CD14-positive monocyte (primary cell): ENCODE measurements at regions of chr3 and their contacts with region 1.

Region 1: GRCh38 chr3:121834696-121835464 is at the starts of genes EAF2 and IQCB1:
- DNase-seq: peak; percentile 94 to 97 (median 96)
- H3K4me3 ChIP-seq: peak within 1 kb of the TSS; percentile 83 to 97 (median 93)
- H3K4me3 Mint-ChIP-seq: peak within 1 kb of the TSS; percentile 96 to 97
- H3K27ac ChIP-seq: peak within 1 kb of the TSS; percentile 75 to 90
- H3K27ac Mint-ChIP-seq: peak within 1 kb of the TSS; percentile 88 to 97 (median 94)
- H3K4me1 ChIP-seq: peaks cover 18 to 44% of the 10 kb centered on the region in 2 donors
- H3K4me1 Mint-ChIP-seq: peaks cover 52% of the 10 kb centered on the region
- H3K27me3 ChIP-seq: no peaks in the 10 kb centered on the region
- H3K27me3 Mint-ChIP-seq: peaks cover 0 to 2% (median 0%) of the 10 kb centered on the region in 3 donors
- CTCF ChIP-seq: no peak
- polyA plus RNA-seq, gene EAF2: 31.5 to 91.6 (median 75.7) TPM
- polyA plus RNA-seq, gene IQCB1: 6.0 to 27.7 (median 7.5) TPM

Region 2: DNA sequence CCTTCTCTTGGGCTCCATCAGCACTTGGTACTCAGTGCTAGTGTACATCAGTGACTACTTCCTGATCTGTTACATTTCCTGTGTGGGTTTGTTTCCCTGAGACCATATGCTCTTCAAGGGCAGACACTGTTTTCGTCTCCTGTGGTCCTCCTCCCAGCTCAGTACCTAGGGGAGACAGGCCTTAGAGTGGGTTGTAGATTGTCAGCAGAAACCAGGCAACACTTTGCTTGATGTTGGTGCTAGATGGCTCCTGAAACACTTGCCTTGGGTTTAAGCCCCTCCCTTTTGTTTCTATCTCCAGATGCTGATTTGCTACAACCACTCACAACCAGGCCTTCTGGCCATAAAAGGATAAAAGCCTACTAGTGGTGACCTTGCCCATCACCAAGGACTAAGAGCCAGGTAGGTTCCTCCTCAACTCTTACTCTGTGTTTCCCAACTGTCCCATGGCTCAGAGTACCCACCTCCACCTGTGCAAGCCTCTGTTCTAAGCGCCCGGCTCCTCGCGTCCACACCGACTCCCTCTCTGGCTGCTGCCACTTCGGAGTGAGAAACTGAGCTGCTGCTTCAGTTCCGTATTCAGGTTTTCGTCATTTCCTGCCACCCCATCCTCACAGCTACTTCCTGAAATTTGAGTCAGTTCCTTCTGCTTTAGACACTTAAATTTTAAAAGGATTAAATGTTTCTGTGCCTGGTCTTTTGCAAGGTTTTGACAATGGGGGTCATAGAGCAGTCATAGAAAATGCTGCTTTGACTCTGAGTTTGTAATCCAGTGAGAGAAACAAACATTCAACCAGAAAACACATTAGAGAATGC is 174.3 kb before region 1 on chr3 and contains the start of gene HCLS1:
- intact Hi-C with region 1: loop called in 1 of 2 experiments (anchors 10 kb)
- DNase-seq: peak; percentile 90 to 92 (median 90)
- H3K4me3 ChIP-seq: peak within 1 kb of the TSS; percentile 69 to 98 (median 80)
- H3K4me3 Mint-ChIP-seq: peak within 1 kb of the TSS; percentile 94 to 99
- H3K27ac ChIP-seq: peak within 1 kb of the TSS; percentile 94 to 97
- H3K27ac Mint-ChIP-seq: peak within 1 kb of the TSS; percentile 99 to 100 (median 100)
- H3K4me1 ChIP-seq: peaks cover 38 to 41% of the 10 kb centered on the region in 2 donors
- H3K4me1 Mint-ChIP-seq: peaks cover 47% of the 10 kb centered on the region
- H3K27me3 ChIP-seq: no peaks in the 10 kb centered on the region
- H3K27me3 Mint-ChIP-seq: no peaks in the 10 kb centered on the region
- CTCF ChIP-seq: no peak
- polyA plus RNA-seq, gene HCLS1: 311 to 483 (median 475) TPM